ENCODE measurements at regions of chr1 and their contacts with region 1.

Region 1: GRCh38 chr1:77744576-77744975 is 15.1 kb downstream of the USP33 start:
- DNase-seq: no peak
- H3K4me3 ChIP-seq: no peak overlapping the region
- CTCF ChIP-seq: no peak

Region 2: DNA sequence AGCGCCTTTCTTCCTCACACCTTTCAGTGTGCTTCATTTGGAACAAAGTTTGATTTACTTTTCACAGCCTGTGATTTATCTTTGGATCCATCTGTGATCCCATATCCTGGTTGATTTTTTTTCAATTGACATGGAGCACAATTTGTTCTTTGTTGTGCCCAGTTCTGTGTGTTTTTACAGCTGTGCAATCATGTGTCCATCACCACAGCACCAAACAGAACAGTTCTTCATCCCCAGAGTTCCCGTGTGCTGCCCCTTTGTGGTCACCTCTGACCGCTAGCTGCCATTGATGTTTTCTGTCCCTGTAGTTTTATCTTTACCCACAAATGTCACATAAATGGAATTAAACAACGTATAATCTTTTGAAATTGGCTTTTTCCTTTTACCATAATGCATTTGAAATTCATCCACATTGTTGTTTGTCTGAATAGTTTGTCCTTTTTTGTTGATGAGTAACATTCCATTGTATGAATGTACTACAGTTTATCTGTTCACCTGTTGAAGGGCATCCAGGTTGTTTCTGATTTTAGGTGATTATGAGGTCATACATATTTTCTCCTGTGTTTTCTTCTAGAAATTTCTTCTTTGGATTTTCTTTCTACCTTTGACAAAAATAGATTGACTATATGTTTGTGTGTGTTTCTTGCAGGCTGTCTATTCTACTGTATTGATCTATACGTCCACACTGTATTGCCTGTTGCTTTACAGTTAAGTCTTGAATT is 52.3 kb after region 1 on chr1:
- in situ Hi-C with region 1: loop called (anchors 5 kb)
- DNase-seq: no peak
- H3K4me3 ChIP-seq: no peak overlapping the region
- CTCF ChIP-seq: no peak

Measured in astrocyte of the cerebellum (primary cell).